ENCODE measurements at regions of chr3 and their contacts with region 1.

Region 1: GRCh38 chr3:162677475-162677874 is 1180.9 kb downstream of the OTOL1 start:
- DNase-seq: no peak
- H3K4me3 ChIP-seq: no peak overlapping the region
- H3K4me3 Mint-ChIP-seq: no peak overlapping the region
- H3K27ac Mint-ChIP-seq: no peak overlapping the region
- H3K4me1 ChIP-seq: no peaks in the 10 kb centered on the region
- H3K4me1 Mint-ChIP-seq: no peaks in the 10 kb centered on the region
- H3K27me3 ChIP-seq: no peaks in the 10 kb centered on the region
- H3K27me3 Mint-ChIP-seq: no peaks in the 10 kb centered on the region
- CTCF ChIP-seq: no peak

Region 2: GRCh38 chr3:162704238-162704637 is 26.8 kb after region 1 on chr3:
- CTCF ChIA-PET with region 1: no interaction called
- POLR2A ChIA-PET with region 1: no interaction called
- intact Hi-C with region 1: loop called (anchors 1 kb)
- DNase-seq: no peak
- H3K4me3 ChIP-seq: no peak overlapping the region
- H3K4me3 Mint-ChIP-seq: no peak overlapping the region
- H3K27ac Mint-ChIP-seq: no peak overlapping the region
- H3K4me1 ChIP-seq: no peaks in the 10 kb centered on the region
- H3K4me1 Mint-ChIP-seq: no peaks in the 10 kb centered on the region
- H3K27me3 ChIP-seq: no peaks in the 10 kb centered on the region
- H3K27me3 Mint-ChIP-seq: no peaks in the 10 kb centered on the region
- CTCF ChIP-seq: no peak

Region 3: DNA sequence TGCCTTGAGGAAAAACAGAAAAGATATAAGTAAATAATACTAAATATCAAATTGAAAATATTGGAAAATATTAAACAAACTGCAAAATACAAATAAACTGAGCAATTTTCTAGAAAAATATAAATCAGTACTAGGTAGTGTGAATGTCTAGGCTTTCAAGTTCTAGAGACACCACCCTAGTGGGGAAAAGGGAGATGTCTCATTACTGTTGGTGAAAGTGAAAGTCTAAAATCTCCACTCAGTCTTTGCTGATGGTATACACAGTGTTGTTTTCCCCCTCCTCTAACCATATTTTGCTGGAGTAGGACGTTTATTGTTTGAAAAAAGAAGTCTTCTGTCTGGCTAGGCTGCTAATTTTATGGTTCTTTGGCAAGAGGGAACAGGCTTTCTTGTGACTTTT is 188.0 kb after region 1 on chr3:
- CTCF ChIA-PET with region 1: no interaction called
- POLR2A ChIA-PET with region 1: no interaction called
- intact Hi-C with region 1: no loop called
- DNase-seq: no peak
- H3K4me3 ChIP-seq: no peak overlapping the region
- H3K4me3 Mint-ChIP-seq: no peak overlapping the region
- H3K27ac Mint-ChIP-seq: no peak overlapping the region
- H3K4me1 ChIP-seq: no peaks in the 10 kb centered on the region
- H3K4me1 Mint-ChIP-seq: no peaks in the 10 kb centered on the region
- H3K27me3 ChIP-seq: no peaks in the 10 kb centered on the region
- H3K27me3 Mint-ChIP-seq: no peaks in the 10 kb centered on the region
- CTCF ChIP-seq: no peak